ENCODE measurements at regions of chr16 and their contacts with region 1.

Region 1: DNA sequence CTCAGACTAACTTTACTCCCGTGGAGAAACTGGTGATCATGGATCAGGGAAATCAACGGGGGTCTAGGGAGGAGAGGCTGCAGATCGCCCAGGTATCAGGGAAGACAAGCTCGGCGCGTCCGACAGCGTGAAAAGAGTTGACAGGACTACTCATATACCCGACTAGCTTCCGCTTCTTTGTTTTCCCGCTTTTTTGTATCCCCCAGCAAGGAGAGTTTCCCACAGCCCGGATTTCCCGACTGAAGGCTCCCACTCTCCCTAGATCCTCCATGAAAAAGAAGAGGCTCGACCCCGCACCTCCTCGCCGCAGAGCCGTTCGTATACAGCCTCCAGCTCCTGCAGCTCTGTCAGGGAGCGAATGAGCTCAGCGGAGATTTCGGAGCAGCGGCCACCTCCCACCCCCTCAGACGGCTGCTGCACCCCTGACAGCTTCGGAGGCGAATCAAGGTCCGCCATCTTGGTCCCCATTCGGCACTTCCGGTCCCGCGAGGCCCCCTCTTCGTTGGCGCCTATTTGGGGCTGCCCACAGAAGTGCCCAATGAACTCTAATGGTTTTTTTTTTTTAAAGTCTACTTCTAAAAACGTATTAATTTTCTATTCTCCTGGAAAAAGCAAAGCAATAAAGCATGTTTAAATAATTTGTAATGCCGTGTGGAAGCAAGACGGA is at the start of gene COG4:
- DNase-seq: peak; percentile 87
- H3K4me3 Mint-ChIP-seq: peak within 1 kb of the TSS; percentile 98
- H3K27ac Mint-ChIP-seq: peak within 1 kb of the TSS; percentile 97
- H3K4me1 Mint-ChIP-seq: peaks cover 20% of the 10 kb centered on the region
- H3K27me3 Mint-ChIP-seq: no peaks in the 10 kb centered on the region
- CTCF ChIP-seq: no peak
- total RNA-seq, gene COG4: 62.2 and 64.9 TPM in 2 replicates

Region 2: DNA sequence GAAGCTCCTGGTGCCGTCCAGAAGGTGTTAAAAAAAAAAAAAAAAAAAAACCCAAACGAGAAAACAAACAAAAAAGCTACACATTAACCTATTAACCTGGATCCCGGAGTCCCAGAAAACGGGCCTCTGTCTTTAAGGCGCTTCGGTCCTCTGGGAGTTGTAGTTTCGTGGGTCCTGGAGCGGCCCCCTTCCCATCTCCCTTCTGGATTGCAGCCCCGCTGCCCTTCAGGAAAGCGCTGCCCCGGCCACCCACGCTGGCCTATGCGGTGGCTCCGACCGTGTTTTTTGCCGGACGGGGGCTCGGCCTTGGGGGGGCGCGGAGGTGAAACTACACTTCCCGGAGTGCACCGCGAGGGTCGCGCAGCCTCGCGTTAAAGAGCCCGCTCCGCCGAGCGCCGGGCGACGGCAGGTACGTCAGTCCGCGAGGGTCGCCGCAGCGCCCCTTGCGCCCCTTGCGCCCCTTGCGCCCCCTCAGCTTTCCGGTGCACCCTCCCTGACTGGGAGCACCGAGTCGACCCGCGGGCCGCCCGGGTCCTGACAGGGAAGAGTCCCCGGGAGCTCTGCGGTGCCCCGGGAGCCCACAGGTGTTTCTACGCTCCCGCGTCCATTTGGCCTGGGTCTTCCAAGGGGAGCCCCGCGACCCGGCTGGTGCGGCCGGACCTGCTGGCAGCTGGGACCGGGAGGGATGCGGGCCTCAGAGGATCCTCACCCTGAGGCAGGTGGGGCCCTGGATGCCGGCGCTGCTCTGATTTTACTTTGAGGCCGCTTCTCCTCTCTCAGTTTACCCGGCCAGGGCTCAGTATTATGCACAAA is 68.8 kb before region 1 on chr16 and contains the start of gene FCSK:
- CTCF ChIA-PET with region 1: no interaction called
- POLR2A ChIA-PET with region 1: interaction called, 14 read pairs
- intact Hi-C with region 1: no loop called
- DNase-seq: peak; percentile 75
- H3K4me3 Mint-ChIP-seq: peak within 1 kb of the TSS; percentile 92
- H3K27ac Mint-ChIP-seq: peak within 1 kb of the TSS; percentile 89
- H3K4me1 Mint-ChIP-seq: peaks cover 6% of the 10 kb centered on the region
- H3K27me3 Mint-ChIP-seq: no peaks in the 10 kb centered on the region
- CTCF ChIP-seq: no peak
- total RNA-seq, gene FCSK: 13.7 and 19.0 TPM in 2 replicates

Region 3: GRCh38 chr16:70512456-70512855 is 10.8 kb before region 1 on chr16:
- CTCF ChIA-PET with region 1: no interaction called
- POLR2A ChIA-PET with region 1: interaction called, 21 read pairs
- intact Hi-C with region 1: no loop called
- DNase-seq: peak; percentile 80
- H3K4me3 Mint-ChIP-seq: no peak overlapping the region
- H3K27ac Mint-ChIP-seq: no peak overlapping the region
- H3K4me1 Mint-ChIP-seq: no peaks in the 10 kb centered on the region
- H3K27me3 Mint-ChIP-seq: no peaks in the 10 kb centered on the region
- CTCF ChIP-seq: no peak

Region 4: GRCh38 chr16:70534971-70535370 is 11.8 kb after region 1 on chr16:
- CTCF ChIA-PET with region 1: interaction called, 9 read pairs
- POLR2A ChIA-PET with region 1: interaction called, 16 read pairs
- intact Hi-C with region 1: no loop called
- DNase-seq: no peak
- H3K4me3 Mint-ChIP-seq: no peak overlapping the region
- H3K27ac Mint-ChIP-seq: no peak overlapping the region
- H3K4me1 Mint-ChIP-seq: no peaks in the 10 kb centered on the region
- H3K27me3 Mint-ChIP-seq: no peaks in the 10 kb centered on the region
- CTCF ChIP-seq: no peak

Region 5: GRCh38 chr16:70582290-70582978 is 59.2 kb after region 1 on chr16:
- CTCF ChIA-PET with region 1: no interaction called
- POLR2A ChIA-PET with region 1: no interaction called
- intact Hi-C with region 1: no loop called
- DNase-seq: no peak
- H3K4me3 Mint-ChIP-seq: no peak overlapping the region
- H3K27ac Mint-ChIP-seq: no peak overlapping the region
- H3K4me1 Mint-ChIP-seq: peaks cover 1% of the 10 kb centered on the region
- H3K27me3 Mint-ChIP-seq: no peaks in the 10 kb centered on the region
- CTCF ChIP-seq: no peak